Caco-2 (cell line): ENCODE measurements at regions of chr3 and their contacts with region 1.

Region 1: DNA sequence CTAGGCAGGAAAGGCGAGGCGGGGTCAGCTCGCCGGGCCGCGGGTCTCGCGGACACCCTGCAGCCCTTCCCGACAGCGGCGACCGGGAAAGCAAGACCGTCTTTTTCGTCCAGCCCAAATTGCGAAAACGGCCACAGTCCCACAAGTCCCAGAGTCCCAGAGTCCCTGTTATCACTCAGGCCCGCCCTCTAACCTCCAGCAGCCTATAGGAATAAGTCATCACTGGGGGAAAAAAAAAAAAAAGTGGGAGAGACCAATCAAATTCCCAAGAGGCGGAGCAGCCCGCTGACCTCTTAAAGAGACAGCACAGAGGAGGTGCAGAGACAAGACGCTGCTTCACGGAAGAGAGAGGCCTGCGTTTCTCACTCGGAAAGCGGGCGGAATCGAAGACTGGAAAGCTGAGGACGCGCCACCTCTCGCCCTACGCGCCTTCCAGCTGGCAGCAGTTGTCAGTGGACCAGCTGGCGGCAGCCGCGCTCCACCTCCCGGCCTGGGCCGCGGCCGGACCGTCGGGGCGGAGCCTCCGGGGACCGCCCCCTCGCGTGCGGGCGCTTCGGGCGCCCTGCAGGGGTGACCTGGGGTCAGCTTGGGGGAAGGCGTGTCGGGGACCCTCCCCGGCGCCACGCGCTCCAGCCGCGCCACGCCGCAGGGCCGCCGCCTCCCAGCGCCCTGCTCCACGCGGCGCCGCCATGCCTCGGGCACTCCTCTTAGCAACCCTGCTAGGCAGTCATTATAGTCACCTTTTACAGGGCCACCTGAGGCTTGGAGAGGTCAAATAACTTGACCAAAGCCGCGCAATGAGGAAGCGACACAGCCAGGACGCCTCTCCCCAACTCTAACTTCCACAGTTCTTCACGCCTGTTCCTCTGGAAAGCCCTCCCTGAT is at the start of gene TPRA1:
- DNase-seq: peak; percentile 94 to 96
- H3K4me3 ChIP-seq: peak within 1 kb of the TSS; percentile 88
- H3K4me3 Mint-ChIP-seq: peak within 1 kb of the TSS; percentile 87
- H3K27ac Mint-ChIP-seq: peak within 1 kb of the TSS; percentile 90
- H3K4me1 ChIP-seq: peaks cover 19% of the 10 kb centered on the region
- H3K4me1 Mint-ChIP-seq: peaks cover 26% of the 10 kb centered on the region
- H3K27me3 ChIP-seq: no peaks in the 10 kb centered on the region
- H3K27me3 Mint-ChIP-seq: no peaks in the 10 kb centered on the region
- CTCF ChIP-seq: peak in 1 of 2 experiments; percentile 34
- total RNA-seq, gene TPRA1: 34.5 and 36.8 TPM in 2 replicates

Region 2: DNA sequence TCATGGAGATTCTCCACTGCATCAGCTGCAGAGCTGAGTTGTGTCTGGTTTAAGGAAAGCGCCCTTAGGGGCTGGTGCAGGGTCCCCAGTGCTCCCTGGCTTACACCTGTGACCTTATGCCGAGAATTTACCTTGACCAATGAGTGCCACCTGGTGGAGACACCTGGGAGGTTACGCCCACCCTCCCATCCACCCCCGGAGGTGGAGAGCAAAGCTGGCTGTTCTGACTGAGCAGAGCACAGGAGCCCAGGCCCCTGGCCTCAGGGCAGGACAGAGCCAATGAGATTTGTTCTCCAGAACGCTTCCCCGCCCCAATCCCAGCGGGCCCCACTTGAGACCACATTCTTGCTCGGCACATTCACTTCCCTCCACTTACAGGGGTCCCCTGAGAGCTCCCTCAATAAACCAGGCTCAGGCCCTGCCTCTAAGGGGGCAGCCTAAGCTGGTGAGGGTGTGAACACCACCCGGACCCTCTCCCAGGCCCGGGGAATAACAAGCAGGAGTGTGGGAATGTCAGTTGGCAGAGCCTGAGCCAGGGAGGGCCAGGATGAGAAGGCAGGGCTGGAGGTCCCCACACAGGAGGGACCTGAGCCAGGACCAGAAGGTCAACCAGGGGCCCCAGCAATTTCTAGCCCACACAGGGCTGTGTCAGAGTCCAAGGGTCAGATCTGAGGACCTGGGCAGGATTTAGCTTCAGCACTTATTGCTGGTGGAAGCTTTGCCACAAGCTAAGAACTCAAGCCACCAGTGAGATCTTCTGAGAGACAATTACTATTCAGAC is 117.4 kb before region 1 on chr3:
- CTCF ChIA-PET with region 1: no interaction called
- POLR2A ChIA-PET with region 1: no interaction called
- intact Hi-C with region 1: no loop called
- DNase-seq: peak; percentile 44 to 48
- H3K4me3 ChIP-seq: no peak overlapping the region
- H3K4me3 Mint-ChIP-seq: no peak overlapping the region
- H3K27ac Mint-ChIP-seq: no peak overlapping the region
- H3K4me1 ChIP-seq: 0 out of 2 replicates have a peak, but pooled peaks cover 3% of the 10 kb centered on the region
- H3K4me1 Mint-ChIP-seq: no peaks in the 10 kb centered on the region
- H3K27me3 ChIP-seq: no peaks in the 10 kb centered on the region
- H3K27me3 Mint-ChIP-seq: peaks cover 9% of the 10 kb centered on the region
- CTCF ChIP-seq: peak in 1 of 2 experiments; percentile 30

Region 3: GRCh38 chr3:127628788-127629466 is 38.1 kb after region 1 on chr3 and contains the start of gene PODXL2:
- CTCF ChIA-PET with region 1: interaction called, 5 read pairs
- POLR2A ChIA-PET with region 1: no interaction called
- intact Hi-C with region 1: loop called (anchors 2 kb)
- DNase-seq: peak; percentile 75 to 87
- H3K4me3 ChIP-seq: peak within 1 kb of the TSS; percentile 83
- H3K4me3 Mint-ChIP-seq: peak within 1 kb of the TSS; percentile 79
- H3K27ac Mint-ChIP-seq: peak within 1 kb of the TSS; percentile 9
- H3K4me1 ChIP-seq: peaks cover 13% of the 10 kb centered on the region; the same call in 1 of the 2 replicates
- H3K4me1 Mint-ChIP-seq: peaks cover 19% of the 10 kb centered on the region
- H3K27me3 ChIP-seq: no peaks in the 10 kb centered on the region
- H3K27me3 Mint-ChIP-seq: peaks cover 3% of the 10 kb centered on the region
- CTCF ChIP-seq: no peak
- total RNA-seq, gene PODXL2: 39.1 and 43.0 TPM in 2 replicates

Region 4: GRCh38 chr3:127672516-127673190 is 81.8 kb after region 1 on chr3 and contains the start of gene ABTB1:
- CTCF ChIA-PET with region 1: no interaction called
- POLR2A ChIA-PET with region 1: no interaction called
- intact Hi-C with region 1: loop called (anchors 10 kb)
- DNase-seq: peak; percentile 82 to 86
- H3K4me3 ChIP-seq: peak within 1 kb of the TSS; percentile 85
- H3K4me3 Mint-ChIP-seq: peak within 1 kb of the TSS; percentile 77
- H3K27ac Mint-ChIP-seq: peak within 1 kb of the TSS; percentile 90
- H3K4me1 ChIP-seq: peaks cover 7% of the 10 kb centered on the region; the same call in 1 of the 2 replicates
- H3K4me1 Mint-ChIP-seq: peaks cover 8% of the 10 kb centered on the region
- H3K27me3 ChIP-seq: no peaks in the 10 kb centered on the region
- H3K27me3 Mint-ChIP-seq: no peaks in the 10 kb centered on the region
- CTCF ChIP-seq: no peak
- total RNA-seq, gene ABTB1: 6.2 TPM in 2 replicates